PC-9 (cell line): ENCODE measurements at regions of chr16 and their contacts with region 1.

Region 1: DNA sequence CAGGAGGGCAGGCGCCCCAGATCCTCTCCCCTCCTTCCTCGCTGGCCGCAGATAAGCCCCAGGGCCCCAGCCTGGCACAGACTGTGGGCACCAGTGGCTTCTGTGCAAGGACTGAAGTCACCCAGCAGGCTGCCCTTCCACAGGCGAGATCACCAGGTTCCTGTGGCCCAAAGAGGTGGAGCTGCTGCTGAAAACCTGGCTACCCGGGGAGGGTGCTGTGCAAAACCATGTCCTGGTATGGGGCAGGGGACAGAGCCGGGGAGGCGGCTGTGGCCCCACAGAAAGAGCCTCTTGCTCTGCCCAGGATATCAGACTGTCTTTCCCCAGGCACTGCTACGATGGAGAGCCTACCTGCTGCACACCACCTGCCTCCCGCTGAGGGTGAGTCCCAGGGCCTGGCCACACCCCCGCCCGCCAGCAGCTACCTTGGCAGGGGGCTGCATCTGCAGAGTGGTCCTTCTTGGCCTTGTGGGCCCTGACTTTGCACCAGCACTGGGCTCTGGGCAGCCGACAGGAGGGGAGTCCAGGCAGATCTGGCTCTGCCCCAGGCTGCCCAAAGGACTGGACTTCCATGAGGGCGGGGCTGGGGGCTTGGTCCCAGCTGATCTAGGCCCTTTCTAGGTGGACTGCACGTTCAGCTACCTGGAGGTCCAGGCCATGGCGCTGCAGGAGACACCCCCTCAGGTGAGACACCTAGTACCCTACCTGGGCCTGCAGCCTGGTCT is 615 bp downstream of the CARMIL2 start:
- DNase-seq: no peak
- H3K4me3 ChIP-seq: no peak overlapping the region
- H3K27ac ChIP-seq: no peak overlapping the region
- H3K4me1 ChIP-seq: no peaks in the 10 kb centered on the region
- H3K27me3 ChIP-seq: peaks cover 5% of the 10 kb centered on the region
- CTCF ChIP-seq: no peak

Region 2: GRCh38 chr16:67632415-67633172 is 13.0 kb before region 1 on chr16:
- CTCF ChIA-PET with region 1: no interaction called
- POLR2A ChIA-PET with region 1: no interaction called
- intact Hi-C with region 1: no loop called
- DNase-seq: no peak
- H3K4me3 ChIP-seq: no peak overlapping the region
- H3K27ac ChIP-seq: no peak overlapping the region
- H3K4me1 ChIP-seq: no peaks in the 10 kb centered on the region
- H3K27me3 ChIP-seq: no peaks in the 10 kb centered on the region
- CTCF ChIP-seq: no peak

Region 3: GRCh38 chr16:67660564-67661028 is 15.0 kb after region 1 on chr16 and contains the start of gene PARD6A:
- CTCF ChIA-PET with region 1: interaction called, 11 read pairs
- POLR2A ChIA-PET with region 1: no interaction called
- intact Hi-C with region 1: no loop called
- DNase-seq: peak; percentile 79 to 87
- H3K4me3 ChIP-seq: peak within 1 kb of the TSS; percentile 97
- H3K27ac ChIP-seq: peak within 1 kb of the TSS; percentile 52
- H3K4me1 ChIP-seq: peaks cover 7% of the 10 kb centered on the region
- H3K27me3 ChIP-seq: no peaks in the 10 kb centered on the region
- CTCF ChIP-seq: no peak
- total RNA-seq, gene PARD6A: 4.4 and 8.1 TPM in 2 replicates

Region 4: GRCh38 chr16:67750466-67750865 is 104.9 kb after region 1 on chr16:
- CTCF ChIA-PET with region 1: no interaction called
- POLR2A ChIA-PET with region 1: no interaction called
- intact Hi-C with region 1: no loop called
- DNase-seq: no peak
- H3K4me3 ChIP-seq: no peak overlapping the region
- H3K27ac ChIP-seq: no peak overlapping the region
- H3K4me1 ChIP-seq: no peaks in the 10 kb centered on the region
- H3K27me3 ChIP-seq: no peaks in the 10 kb centered on the region
- CTCF ChIP-seq: no peak